Activated T-helper 1 cell treated with anti-CD3 and anti-CD28 coated beads, Interleukin-12 subunit alpha, Interleukin-12 subunit beta, Interleukin-2, Interleukin-4 antibody, amounts not matched to agents 30 ng/mL and 10 ng/mL and 1 ng/mL, durations not matched to agents 14 hours and 24 hours and 36 hours (primary cell): ENCODE measurements at regions of chr4 and their contacts with region 1.

Region 1: DNA sequence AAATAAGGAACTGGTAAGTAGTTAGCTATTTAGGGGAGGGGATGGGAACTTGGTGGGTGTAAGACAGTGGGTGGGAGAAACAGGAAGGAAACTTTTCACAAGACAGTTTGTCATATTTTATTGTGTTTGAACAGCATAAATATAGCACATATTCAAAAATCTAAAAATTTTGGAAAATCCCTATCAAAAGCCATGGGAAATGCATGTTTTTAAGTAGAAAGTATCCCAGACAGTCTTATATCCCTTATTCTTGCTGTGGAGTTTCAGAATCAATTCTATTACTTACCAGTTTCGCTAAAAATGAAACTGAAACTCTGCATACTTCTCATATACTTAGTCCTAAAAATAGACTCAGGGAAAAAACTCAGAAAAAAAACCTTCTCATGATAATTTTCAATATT is 22.3 kb upstream of the RASGEF1B start:
- DNase-seq: no peak
- H3K4me3 Mint-ChIP-seq: peak overlapping the region; percentile 50
- H3K27ac Mint-ChIP-seq: peak overlapping the region; percentile 25
- H3K4me1 Mint-ChIP-seq: peaks cover 43% of the 10 kb centered on the region
- H3K27me3 Mint-ChIP-seq: peaks cover 10% of the 10 kb centered on the region

Region 2: DNA sequence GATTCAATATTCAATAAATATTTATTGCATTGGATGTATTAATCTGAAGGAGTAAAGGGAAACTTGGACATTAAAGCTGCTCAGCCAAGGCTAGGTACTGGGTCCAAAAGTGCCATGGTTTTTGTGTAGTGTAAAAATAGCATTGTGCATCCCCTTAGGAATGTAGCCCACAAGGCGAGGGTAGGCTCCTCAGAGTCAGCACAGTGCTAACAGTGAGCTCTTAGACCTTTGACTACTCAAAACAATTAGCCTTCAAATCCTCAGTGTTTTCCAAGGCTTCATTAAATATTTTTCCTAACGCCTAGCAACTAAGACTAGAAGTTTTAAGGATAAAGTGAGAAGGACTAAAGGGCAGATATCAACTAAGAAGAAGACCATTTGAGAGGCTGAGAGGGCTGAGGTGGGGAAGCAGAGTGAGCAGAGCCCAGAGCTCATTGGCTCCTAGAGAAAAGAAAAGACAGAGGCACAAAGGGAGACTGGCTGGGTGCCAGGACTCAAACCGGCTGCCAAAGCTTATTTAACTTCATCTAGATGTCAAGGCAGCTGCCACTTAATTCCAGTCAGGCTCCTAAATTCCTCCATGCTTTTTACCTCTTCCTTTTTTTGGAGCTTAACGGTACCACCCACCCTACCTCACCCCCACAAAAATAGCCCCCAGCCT is 296.0 kb before region 1 on chr4:
- intact Hi-C with region 1: no loop called
- DNase-seq: no peak
- H3K4me3 Mint-ChIP-seq: no peak overlapping the region
- H3K27ac Mint-ChIP-seq: no peak overlapping the region
- H3K4me1 Mint-ChIP-seq: no peaks in the 10 kb centered on the region
- H3K27me3 Mint-ChIP-seq: no peaks in the 10 kb centered on the region

Region 3: DNA sequence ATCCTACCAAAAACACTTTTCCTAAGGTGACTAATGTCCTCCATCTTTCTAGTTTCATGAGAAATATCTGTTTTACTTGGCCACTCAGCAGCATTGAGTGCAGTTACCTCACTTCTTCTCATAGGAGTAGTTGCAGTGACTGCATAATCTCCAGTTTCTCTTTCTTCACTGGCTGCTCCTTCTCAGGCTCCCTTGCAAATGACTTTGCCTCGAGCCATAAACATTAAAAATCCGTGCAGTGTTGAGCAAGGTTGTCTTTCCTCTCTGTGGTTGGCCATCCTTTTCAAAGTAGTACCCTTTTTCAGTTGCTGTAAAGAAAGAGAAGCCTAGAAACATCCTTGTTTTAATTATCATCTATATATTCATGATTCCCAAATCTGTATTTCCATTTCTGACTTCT is 268.8 kb before region 1 on chr4:
- intact Hi-C with region 1: no loop called
- DNase-seq: no peak
- H3K4me3 Mint-ChIP-seq: no peak overlapping the region
- H3K27ac Mint-ChIP-seq: no peak overlapping the region
- H3K4me1 Mint-ChIP-seq: no peaks in the 10 kb centered on the region
- H3K27me3 Mint-ChIP-seq: peaks cover 3% of the 10 kb centered on the region

Region 4: DNA sequence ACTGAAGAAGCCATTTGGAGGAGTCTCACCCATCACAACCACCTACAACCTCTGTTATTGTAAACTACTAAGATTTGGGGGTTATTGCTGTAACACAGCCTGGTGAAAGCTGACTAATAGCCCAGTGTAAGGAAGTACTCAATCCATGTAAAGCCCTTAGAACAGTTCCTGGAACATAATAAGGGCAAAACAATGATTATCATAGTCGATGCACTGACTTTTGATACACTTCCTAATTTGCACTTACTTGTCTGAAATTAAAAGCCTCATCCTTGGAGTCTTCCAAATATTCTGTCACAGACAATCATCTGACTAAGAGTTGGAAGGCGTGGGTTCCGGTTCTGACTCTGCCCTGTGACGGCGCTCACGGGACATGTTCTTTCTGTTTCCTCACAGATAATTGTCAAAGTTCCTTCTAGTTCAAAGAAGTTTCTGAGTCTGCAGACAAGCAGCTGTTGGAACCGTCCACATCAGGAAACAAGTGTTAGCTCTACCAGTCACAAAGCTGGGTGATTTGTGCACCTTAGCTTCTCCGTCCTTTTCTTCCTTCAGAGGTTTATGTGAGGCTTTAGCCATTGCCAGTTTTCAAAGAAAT is 11.1 kb after region 1 on chr4:
- intact Hi-C with region 1: loop called (anchors 1 kb)
- DNase-seq: peak; percentile 48
- H3K4me3 Mint-ChIP-seq: peak overlapping the region; percentile 30
- H3K27ac Mint-ChIP-seq: peak overlapping the region; percentile 45
- H3K4me1 Mint-ChIP-seq: peaks cover 36% of the 10 kb centered on the region
- H3K27me3 Mint-ChIP-seq: peaks cover 11% of the 10 kb centered on the region

Region 5: DNA sequence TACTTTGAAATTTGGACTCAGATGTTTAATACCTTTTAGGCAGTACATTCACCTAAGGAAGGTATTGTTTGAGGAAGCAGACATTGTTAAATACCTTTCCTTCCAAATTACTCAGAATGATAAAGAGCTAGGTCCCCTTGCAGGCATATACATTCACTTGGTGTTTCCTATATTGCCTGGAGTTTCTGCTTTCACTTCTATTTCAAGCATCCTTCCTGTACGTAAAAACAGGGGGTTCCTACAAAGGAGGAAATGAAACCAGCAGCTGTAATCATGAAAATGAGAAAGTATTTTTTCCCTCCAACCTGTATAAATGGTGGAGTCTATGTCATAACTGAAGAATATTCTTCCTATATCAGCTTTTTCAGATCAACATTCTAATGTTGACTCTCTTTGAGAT is 68.1 kb after region 1 on chr4:
- intact Hi-C with region 1: no loop called
- DNase-seq: no peak
- H3K4me3 Mint-ChIP-seq: no peak overlapping the region
- H3K27ac Mint-ChIP-seq: no peak overlapping the region
- H3K4me1 Mint-ChIP-seq: peaks cover 14% of the 10 kb centered on the region
- H3K27me3 Mint-ChIP-seq: peaks cover 2% of the 10 kb centered on the region

Region 6: DNA sequence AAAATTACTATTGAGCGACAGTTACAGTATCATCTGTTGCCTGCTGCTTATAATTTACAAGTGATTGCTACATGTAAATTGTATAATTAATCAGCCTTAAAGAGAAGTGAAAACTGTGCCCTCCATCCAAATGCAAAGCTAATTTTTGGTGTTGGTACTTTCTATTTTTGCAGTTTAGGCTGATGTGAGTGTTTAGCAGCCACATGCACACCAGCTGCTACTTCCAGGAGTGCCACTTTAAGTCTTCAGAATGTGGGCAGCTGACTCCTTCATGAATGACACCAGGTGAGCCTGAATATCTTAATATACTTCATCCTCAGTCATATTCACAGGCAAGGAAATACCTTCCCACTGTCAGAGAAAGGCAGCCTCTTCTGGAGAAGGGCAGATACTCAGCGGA is 127.5 kb after region 1 on chr4:
- intact Hi-C with region 1: no loop called
- DNase-seq: no peak
- H3K4me3 Mint-ChIP-seq: no peak overlapping the region
- H3K27ac Mint-ChIP-seq: no peak overlapping the region
- H3K4me1 Mint-ChIP-seq: no peaks in the 10 kb centered on the region
- H3K27me3 Mint-ChIP-seq: no peaks in the 10 kb centered on the region

Region 7: DNA sequence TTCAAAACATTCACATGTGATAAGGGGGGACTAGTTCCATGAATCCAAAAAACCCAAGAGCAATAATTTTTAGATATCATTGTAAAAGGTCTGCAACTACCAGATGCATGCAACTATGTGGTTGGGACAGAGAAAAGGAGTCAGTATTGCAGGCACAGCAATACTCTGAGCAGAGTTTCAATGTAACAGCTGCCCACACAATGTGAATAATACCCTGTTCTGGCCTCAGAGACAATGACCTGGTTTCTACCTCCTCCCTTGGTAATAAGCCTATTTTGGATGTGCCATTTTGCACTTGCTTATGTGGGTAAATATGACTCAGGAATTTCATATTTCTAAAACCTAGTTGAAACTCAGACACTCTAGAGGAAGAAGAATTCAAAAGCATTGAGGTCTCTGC is 172.5 kb after region 1 on chr4:
- intact Hi-C with region 1: loop called (anchors 5 kb)
- DNase-seq: no peak
- H3K4me3 Mint-ChIP-seq: no peak overlapping the region
- H3K27ac Mint-ChIP-seq: no peak overlapping the region
- H3K4me1 Mint-ChIP-seq: peaks cover 10% of the 10 kb centered on the region
- H3K27me3 Mint-ChIP-seq: no peaks in the 10 kb centered on the region

Region 8: DNA sequence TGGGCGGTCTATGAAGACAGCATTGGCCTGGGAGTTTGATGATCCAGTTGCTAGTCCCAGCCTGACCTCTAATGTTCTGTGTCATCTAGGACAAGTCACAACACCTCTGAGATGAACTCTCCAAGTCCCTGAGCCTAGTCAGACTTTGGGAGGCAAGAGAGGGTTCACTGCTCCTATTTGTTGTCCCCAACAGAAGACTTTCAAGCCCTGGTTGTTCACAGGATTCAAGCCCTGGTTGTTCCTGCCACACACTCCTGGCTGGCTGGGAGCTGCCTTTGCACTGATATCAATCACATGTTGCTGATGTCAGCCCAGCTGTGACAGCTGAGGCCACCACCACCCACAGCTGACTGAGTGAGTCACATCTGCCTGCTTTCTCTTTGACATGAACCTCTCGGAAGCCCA is 230.9 kb after region 1 on chr4:
- intact Hi-C with region 1: loop called (anchors 2 kb)
- DNase-seq: peak; percentile 37
- H3K4me3 Mint-ChIP-seq: no peak overlapping the region
- H3K27ac Mint-ChIP-seq: no peak overlapping the region
- H3K4me1 Mint-ChIP-seq: peaks cover 17% of the 10 kb centered on the region
- H3K27me3 Mint-ChIP-seq: peaks cover 19% of the 10 kb centered on the region

Region 9: DNA sequence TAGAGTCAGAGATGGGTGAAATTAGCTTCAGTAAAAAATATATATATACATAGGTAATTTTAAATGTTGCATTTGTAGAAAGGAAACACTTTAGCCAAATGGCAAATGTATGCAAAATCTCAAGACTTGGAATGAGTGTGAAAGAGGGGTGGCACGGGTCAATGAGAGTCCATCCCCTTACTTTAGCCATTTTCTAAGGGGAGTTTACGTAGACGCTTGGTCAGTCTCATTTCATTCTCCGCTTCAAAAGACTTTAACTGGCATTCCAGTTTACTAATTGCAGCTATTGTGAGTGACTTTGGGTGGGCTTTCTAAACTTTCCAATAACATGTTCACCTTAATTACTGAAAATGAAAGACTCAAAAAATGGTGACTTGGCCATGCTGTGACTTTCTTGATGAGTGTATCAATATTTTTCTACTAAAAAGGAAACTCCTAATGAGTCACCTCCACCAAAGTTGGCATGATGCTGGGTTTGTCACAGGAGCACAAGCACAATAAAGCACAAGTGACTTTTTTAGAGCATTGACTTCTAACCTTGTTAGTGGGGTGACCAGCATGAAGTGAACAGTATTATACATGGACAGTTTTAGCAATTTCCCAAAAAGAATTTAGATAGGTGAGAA is 333.7 kb after region 1 on chr4:
- intact Hi-C with region 1: loop called (anchors 1 kb)
- DNase-seq: no peak
- H3K4me3 Mint-ChIP-seq: no peak overlapping the region
- H3K27ac Mint-ChIP-seq: peak overlapping the region; percentile 11
- H3K4me1 Mint-ChIP-seq: peaks cover 13% of the 10 kb centered on the region
- H3K27me3 Mint-ChIP-seq: peaks cover 2% of the 10 kb centered on the region